ENCODE measurements at regions of chr12 and their contacts with region 1.

Region 1: GRCh38 chr12:31272607-31273225 is 53.2 kb downstream of the SINHCAF start:
- DNase-seq: no peak
- H3K4me3 ChIP-seq: no peak overlapping the region
- H3K27me3 ChIP-seq: no peaks in the 10 kb centered on the region
- CTCF ChIP-seq: no peak

Region 2: DNA sequence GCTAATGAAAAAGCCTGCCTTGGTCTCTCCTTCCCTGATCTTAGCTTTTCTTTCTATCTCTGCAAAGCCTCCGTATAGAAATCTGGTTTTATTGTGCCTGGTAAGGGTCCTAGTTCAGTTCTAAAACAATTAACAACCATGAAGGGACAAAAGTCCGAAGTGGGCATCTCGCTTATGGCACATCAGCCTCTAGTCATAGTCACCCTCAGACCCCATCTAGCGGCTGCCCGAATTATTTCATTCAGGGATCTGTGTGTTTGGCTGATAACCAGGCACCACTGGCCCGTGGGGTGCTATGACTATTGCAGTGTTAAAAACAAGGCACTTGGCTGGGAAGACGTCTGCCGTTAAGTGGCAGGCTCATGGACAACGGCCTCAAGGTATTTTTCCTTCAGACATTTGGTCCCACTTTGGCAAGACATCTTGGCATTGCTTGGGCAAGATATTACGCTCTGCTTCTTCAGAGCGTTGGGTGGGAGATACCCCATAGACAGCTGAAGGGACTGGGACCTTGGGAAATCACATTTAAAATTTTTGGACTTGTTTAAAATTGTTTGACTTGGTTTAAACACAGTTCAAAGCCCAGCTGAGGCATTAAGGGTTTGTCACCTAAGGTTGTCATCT is 33.8 kb before region 1 on chr12:
- CTCF ChIA-PET with region 1: interaction called, 14 read pairs
- POLR2A ChIA-PET with region 1: no interaction called
- DNase-seq: no peak
- H3K4me3 ChIP-seq: no peak overlapping the region
- H3K27me3 ChIP-seq: peaks cover 9% of the 10 kb centered on the region
- CTCF ChIP-seq: peak; percentile 78

Region 3: GRCh38 chr12:31250179-31250578 is 22.5 kb before region 1 on chr12:
- CTCF ChIA-PET with region 1: interaction called, 35 read pairs
- POLR2A ChIA-PET with region 1: no interaction called
- DNase-seq: no peak
- H3K4me3 ChIP-seq: no peak overlapping the region
- H3K27me3 ChIP-seq: no peaks in the 10 kb centered on the region
- CTCF ChIP-seq: no peak

Region 4: GRCh38 chr12:31289441-31289840 is 16.7 kb after region 1 on chr12:
- CTCF ChIA-PET with region 1: interaction called, 35 read pairs
- POLR2A ChIA-PET with region 1: no interaction called
- DNase-seq: no peak
- H3K4me3 ChIP-seq: no peak overlapping the region
- H3K27me3 ChIP-seq: no peaks in the 10 kb centered on the region
- CTCF ChIP-seq: no peak